Head of caudate nucleus (tissue), 42 donors: ENCODE measurements at regions of chr7 and their contacts with region 1.

Region 1: DNA sequence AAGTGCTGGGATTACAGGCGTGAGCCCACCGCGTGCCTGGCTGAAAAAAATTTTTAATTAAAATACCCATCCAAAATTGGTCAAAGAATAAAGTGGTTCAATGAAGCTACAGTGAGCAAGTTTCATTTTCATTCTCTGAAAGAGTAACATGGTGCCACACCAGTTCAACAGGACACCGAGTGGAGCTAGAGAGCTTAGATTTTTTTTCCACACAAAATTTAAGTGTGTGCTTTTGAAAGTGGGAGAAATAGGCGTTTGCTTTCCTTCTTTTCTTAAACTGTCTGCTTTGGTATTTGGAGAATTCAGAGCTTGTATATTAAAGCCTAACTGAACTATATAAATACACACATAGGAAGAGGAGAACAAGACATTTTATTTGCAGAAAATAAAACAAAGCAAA is 43.4 kb downstream of the BPGM start:
- DNase-seq: peak in 18 of 42 donors; percentile 4 to 73 (median 37)

Region 2: DNA sequence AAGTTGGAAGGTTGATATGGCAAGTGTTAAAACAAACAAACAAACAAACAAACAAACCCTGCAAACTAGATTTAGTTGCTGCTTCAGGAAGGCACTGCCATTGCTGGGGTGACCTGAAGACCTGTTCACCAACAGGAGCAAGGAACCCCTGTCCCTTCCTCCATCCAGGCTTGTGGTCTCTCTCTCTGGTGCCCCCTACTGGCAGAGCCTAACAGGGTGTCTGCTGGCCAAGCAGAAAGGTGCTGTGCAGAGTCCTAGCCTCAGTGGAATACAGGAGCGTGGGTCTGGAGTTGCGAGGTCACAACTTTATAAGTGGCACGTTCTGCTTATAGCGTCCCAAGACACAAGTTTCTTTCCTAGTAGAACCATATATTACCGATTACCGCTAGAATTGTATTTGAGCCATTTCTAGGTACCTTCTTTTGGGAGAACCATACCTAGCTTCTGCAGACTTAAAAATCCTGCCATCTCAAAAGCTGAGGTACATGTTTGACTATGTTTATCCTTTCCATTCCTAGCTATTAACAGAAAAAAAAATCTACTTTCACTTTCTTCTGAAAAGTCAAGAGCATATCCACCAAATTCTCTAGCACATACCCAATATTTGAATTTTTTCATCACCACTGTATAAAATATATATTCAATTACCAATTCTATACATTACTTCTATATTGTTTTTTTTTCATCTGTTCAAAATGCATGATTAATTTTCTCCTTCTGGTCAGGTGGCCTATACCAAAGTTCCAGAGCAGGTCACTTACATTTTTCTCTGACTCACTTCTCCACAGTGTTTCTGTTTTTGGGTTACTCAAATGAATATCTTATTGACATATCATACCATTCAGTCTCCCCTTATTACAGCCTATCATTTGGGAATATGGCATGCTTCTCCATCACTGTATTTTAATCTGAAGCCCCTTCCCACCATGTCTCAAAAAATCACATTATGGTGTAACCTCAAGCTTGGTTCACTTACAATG is 60.4 kb after region 1 on chr7:
- intact Hi-C with region 1: loop called (anchors 5 kb)
- DNase-seq: peak in 40 of 42 donors; percentile 9 to 87 (median 52)

Region 3: DNA sequence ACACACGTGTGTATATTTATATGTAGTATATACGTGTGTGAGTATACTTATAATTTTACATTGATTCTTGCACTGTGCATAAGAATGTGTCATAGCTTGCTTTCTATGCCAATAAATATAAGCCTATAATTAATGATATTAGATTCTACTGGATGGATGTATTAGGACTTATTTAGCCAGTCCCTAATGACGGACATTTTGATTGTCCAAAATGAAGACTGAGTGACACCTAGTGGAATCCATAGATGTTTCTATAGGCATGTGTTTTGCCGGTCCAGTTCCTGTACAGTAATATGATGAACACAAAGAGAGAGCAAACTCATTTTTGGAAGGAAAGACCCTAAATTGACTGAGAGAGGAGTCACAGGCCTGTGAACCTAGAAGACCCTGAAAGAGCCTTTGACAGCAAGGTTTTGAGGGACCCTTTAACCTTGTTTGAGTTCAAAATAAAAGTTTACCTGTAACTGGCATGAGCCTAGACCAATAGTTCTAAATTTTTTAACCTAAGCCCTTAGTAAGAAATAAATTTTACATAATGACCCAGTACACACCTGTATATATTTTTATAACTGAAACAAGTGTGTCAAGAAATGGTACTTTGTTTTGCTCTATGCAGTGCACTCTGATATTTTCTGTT is 253.9 kb after region 1 on chr7:
- intact Hi-C with region 1: loop called (anchors 10 kb)
- DNase-seq: peak in 3 of 42 donors; percentile 7 to 57 (median 12)

Region 4: GRCh38 chr7:135170274-135170997 is 480.4 kb after region 1 on chr7 and contains the start of gene CYREN:
- intact Hi-C with region 1: loop called (anchors 10 kb)
- DNase-seq: peak; percentile 85 to 98 (median 95)